Activated CD4-positive, alpha-beta T cell treated with anti-CD3 and anti-CD28 coated beads for 36 hours (primary cell): ENCODE measurements at regions of chr15 and their contacts with region 1.

Region 1: GRCh38 chr15:51162865-51163762 is 68.4 kb upstream of the TNFAIP8L3 start:
- DNase-seq: peak; percentile 82
- ATAC-seq: peak; percentile 93
- H3K4me3 Mint-ChIP-seq: no peak overlapping the region
- H3K27ac Mint-ChIP-seq: no peak overlapping the region
- H3K4me1 Mint-ChIP-seq: peaks cover 9% of the 10 kb centered on the region
- H3K27me3 Mint-ChIP-seq: peaks cover 20% of the 10 kb centered on the region

Region 2: GRCh38 chr15:51144021-51144532 is 19.0 kb before region 1 on chr15:
- CTCF ChIA-PET with region 1: interaction called, 22 read pairs
- POLR2A ChIA-PET with region 1: no interaction called
- intact Hi-C with region 1: no loop called
- DNase-seq: no peak
- ATAC-seq: no peak
- H3K4me3 Mint-ChIP-seq: no peak overlapping the region
- H3K27ac Mint-ChIP-seq: no peak overlapping the region
- H3K4me1 Mint-ChIP-seq: no peaks in the 10 kb centered on the region
- H3K27me3 Mint-ChIP-seq: peaks cover 17% of the 10 kb centered on the region

Region 3: DNA sequence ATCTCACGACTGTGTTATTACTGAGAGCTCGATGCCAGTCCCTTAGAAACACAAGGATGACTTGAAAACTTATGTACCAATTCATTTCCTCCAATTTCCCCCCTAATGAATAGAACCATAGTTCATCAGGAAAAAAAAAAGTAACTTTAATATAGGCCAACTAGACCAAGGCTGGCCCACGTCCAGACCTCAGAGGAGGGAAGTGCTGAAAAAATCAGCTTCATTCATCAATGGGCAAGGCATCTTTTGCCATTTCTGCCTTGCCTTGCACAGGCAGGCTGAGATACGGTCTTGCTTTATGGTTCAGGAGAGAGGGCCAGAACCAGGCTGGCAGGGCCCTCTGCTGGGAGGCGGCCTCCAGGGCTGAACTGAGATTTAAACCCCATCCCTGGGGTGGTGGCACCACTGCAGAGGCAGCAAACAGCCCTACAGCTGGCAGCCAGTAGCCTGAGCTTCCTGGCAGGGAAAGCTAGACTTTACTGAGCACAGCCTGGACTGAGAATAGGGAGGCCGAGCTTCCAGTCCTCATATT is 35.7 kb after region 1 on chr15:
- CTCF ChIA-PET with region 1: interaction called, 52 read pairs
- POLR2A ChIA-PET with region 1: no interaction called
- intact Hi-C with region 1: no loop called
- DNase-seq: no peak
- ATAC-seq: no peak
- H3K4me3 Mint-ChIP-seq: no peak overlapping the region
- H3K27ac Mint-ChIP-seq: no peak overlapping the region
- H3K4me1 Mint-ChIP-seq: no peaks in the 10 kb centered on the region
- H3K27me3 Mint-ChIP-seq: peaks cover 23% of the 10 kb centered on the region

Region 4: GRCh38 chr15:51327056-51327805 is 164.1 kb after region 1 on chr15:
- CTCF ChIA-PET with region 1: no interaction called
- POLR2A ChIA-PET with region 1: no interaction called
- intact Hi-C with region 1: no loop called
- DNase-seq: no peak
- ATAC-seq: no peak
- H3K4me3 Mint-ChIP-seq: no peak overlapping the region
- H3K27ac Mint-ChIP-seq: no peak overlapping the region
- H3K4me1 Mint-ChIP-seq: no peaks in the 10 kb centered on the region
- H3K27me3 Mint-ChIP-seq: peaks cover 5% of the 10 kb centered on the region

Region 5: GRCh38 chr15:51380999-51381795 is 218.1 kb after region 1 on chr15:
- CTCF ChIA-PET with region 1: interaction called, 17 read pairs
- POLR2A ChIA-PET with region 1: no interaction called
- intact Hi-C with region 1: loop called (anchors 1 kb)
- DNase-seq: peak; percentile 55
- ATAC-seq: peak; percentile 78
- H3K4me3 Mint-ChIP-seq: no peak overlapping the region
- H3K27ac Mint-ChIP-seq: no peak overlapping the region
- H3K4me1 Mint-ChIP-seq: no peaks in the 10 kb centered on the region
- H3K27me3 Mint-ChIP-seq: peaks cover 11% of the 10 kb centered on the region

Region 6: GRCh38 chr15:51499379-51499976 is 336.4 kb after region 1 on chr15:
- CTCF ChIA-PET with region 1: interaction called, 17 read pairs
- POLR2A ChIA-PET with region 1: no interaction called
- intact Hi-C with region 1: loop called (anchors 1 to 5 kb)
- DNase-seq: no peak
- ATAC-seq: no peak
- H3K4me3 Mint-ChIP-seq: no peak overlapping the region
- H3K27ac Mint-ChIP-seq: no peak overlapping the region
- H3K4me1 Mint-ChIP-seq: peaks cover 3% of the 10 kb centered on the region
- H3K27me3 Mint-ChIP-seq: no peaks in the 10 kb centered on the region